Activated B cell treated with CpG ODN at 0.5 μM for 24 hours (primary cell): ENCODE measurements at regions of chr7 and their contacts with region 1.

Region 1: DNA sequence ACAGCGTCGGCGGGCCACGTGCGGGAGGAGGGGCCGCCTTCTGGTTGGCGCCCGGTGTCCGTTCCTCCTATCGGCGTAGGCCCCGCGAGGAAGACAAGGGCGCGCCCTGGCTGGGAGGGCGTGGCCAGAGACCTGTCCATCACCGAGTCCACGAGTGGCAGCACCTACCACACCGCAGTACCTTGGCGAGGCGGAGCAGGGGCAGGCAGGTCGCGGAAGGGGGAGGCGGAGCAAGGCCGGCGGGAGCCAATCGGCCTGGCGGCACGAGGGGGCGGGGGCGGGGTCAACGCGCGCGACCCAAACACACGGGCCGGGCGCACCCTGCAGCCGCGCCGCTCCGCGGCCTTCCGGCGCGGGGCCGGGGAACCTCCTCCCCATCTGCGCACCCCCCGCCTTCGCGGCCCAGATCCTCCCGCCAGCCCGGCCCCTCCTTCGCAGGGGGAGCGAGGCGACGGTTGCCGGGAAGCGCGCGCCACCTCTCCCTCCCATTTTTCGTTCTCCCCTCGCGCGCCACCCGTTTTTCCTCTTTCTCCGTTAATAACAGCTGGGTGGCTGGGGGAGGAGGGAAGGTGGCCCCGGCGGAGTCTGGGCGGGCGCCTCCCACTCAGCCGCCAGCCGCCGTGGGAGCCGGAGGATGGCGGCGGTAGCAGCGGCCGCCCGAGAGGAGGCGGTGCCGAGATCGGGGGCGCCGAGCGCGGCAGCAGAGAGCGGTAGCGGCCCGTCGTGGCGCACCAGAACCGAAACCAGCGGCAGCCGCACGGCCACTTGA is at the start of gene ZNRF2:
- DNase-seq: peak; percentile 95
- ATAC-seq: peak; percentile 82
- H3K4me3 Mint-ChIP-seq: peak within 1 kb of the TSS; percentile 87
- H3K27ac Mint-ChIP-seq: peak within 1 kb of the TSS; percentile 90
- H3K4me1 Mint-ChIP-seq: peaks cover 48% of the 10 kb centered on the region
- H3K27me3 Mint-ChIP-seq: no peaks in the 10 kb centered on the region
- CTCF ChIP-seq: no peak
- total RNA-seq, gene ZNRF2: 18.7 and 21.4 TPM in 2 replicates

Region 2: GRCh38 chr7:30134611-30135545 is 149.6 kb before region 1 on chr7 and contains the start of gene MTURN:
- CTCF ChIA-PET with region 1: no interaction called
- POLR2A ChIA-PET with region 1: interaction called, 4 read pairs
- intact Hi-C with region 1: loop called (anchors 1 kb)
- DNase-seq: peak; percentile 85
- ATAC-seq: peak; percentile 82
- H3K4me3 Mint-ChIP-seq: peak within 1 kb of the TSS; percentile 91
- H3K27ac Mint-ChIP-seq: peak within 1 kb of the TSS; percentile 77
- H3K4me1 Mint-ChIP-seq: peaks cover 12% of the 10 kb centered on the region
- H3K27me3 Mint-ChIP-seq: peaks cover 11% of the 10 kb centered on the region
- CTCF ChIP-seq: no peak
- total RNA-seq, gene MTURN: 2.8 and 4.6 TPM in 2 replicates

Region 3: DNA sequence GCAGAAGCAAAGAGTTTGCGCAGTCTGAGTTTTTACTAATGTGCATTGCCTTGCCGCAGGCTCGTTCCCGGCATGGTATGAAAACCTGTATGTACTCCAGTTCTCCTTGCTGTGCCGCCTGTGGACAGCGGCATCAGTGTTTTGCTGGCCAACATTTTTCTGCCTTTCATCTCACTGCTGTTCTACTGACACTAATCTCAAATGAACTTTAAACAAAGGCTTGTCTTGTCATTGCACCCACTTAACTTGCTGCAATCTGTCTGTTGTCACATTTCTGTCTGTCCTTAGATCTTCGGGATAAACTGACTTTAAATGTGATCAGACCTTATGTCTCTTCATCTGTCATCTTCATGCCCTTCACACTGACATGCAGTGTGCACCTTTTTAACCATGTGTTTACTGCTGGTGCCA is 71.8 kb before region 1 on chr7:
- CTCF ChIA-PET with region 1: no interaction called
- POLR2A ChIA-PET with region 1: no interaction called
- intact Hi-C with region 1: no loop called
- DNase-seq: no peak
- ATAC-seq: no peak
- H3K4me3 Mint-ChIP-seq: no peak overlapping the region
- H3K27ac Mint-ChIP-seq: no peak overlapping the region
- H3K4me1 Mint-ChIP-seq: peaks cover 20% of the 10 kb centered on the region
- H3K27me3 Mint-ChIP-seq: no peaks in the 10 kb centered on the region
- CTCF ChIP-seq: no peak

Region 4: GRCh38 chr7:30225863-30226613 is 58.4 kb before region 1 on chr7:
- CTCF ChIA-PET with region 1: no interaction called
- POLR2A ChIA-PET with region 1: no interaction called
- intact Hi-C with region 1: loop called (anchors 1 kb)
- DNase-seq: peak; percentile 41
- ATAC-seq: peak; percentile 98
- H3K4me3 Mint-ChIP-seq: peak overlapping the region; percentile 39
- H3K27ac Mint-ChIP-seq: peak overlapping the region; percentile 92
- H3K4me1 Mint-ChIP-seq: peaks cover 28% of the 10 kb centered on the region
- H3K27me3 Mint-ChIP-seq: no peaks in the 10 kb centered on the region
- CTCF ChIP-seq: no peak

Region 5: GRCh38 chr7:30322271-30323005 is 38.0 kb after region 1 on chr7:
- CTCF ChIA-PET with region 1: interaction called, 3 read pairs
- POLR2A ChIA-PET with region 1: interaction called, 28 read pairs
- intact Hi-C with region 1: loop called (anchors 1 kb)
- DNase-seq: no peak
- ATAC-seq: peak; percentile 78
- H3K4me3 Mint-ChIP-seq: peak overlapping the region; percentile 78
- H3K27ac Mint-ChIP-seq: peak overlapping the region; percentile 97
- H3K4me1 Mint-ChIP-seq: peaks cover 83% of the 10 kb centered on the region
- H3K27me3 Mint-ChIP-seq: no peaks in the 10 kb centered on the region
- CTCF ChIP-seq: no peak

Region 6: GRCh38 chr7:30412810-30413504 is 128.5 kb after region 1 on chr7:
- CTCF ChIA-PET with region 1: no interaction called
- POLR2A ChIA-PET with region 1: no interaction called
- intact Hi-C with region 1: loop called (anchors 2 kb)
- DNase-seq: no peak
- ATAC-seq: peak; percentile 57
- H3K4me3 Mint-ChIP-seq: no peak overlapping the region
- H3K27ac Mint-ChIP-seq: no peak overlapping the region
- H3K4me1 Mint-ChIP-seq: peaks cover 33% of the 10 kb centered on the region
- H3K27me3 Mint-ChIP-seq: no peaks in the 10 kb centered on the region
- CTCF ChIP-seq: no peak

Region 7: GRCh38 chr7:30564243-30564892 is 279.9 kb after region 1 on chr7:
- CTCF ChIA-PET with region 1: interaction called, 10 read pairs
- POLR2A ChIA-PET with region 1: interaction called, 3 read pairs
- intact Hi-C with region 1: loop called (anchors 2 kb)
- DNase-seq: peak; percentile 65
- ATAC-seq: peak; percentile 97
- H3K4me3 Mint-ChIP-seq: no peak overlapping the region
- H3K27ac Mint-ChIP-seq: no peak overlapping the region
- H3K4me1 Mint-ChIP-seq: no peaks in the 10 kb centered on the region
- H3K27me3 Mint-ChIP-seq: no peaks in the 10 kb centered on the region
- CTCF ChIP-seq: peak; percentile 38